Natural killer cell (primary cell): ENCODE measurements at regions of chr16 and their contacts with region 1.

Region 1: DNA sequence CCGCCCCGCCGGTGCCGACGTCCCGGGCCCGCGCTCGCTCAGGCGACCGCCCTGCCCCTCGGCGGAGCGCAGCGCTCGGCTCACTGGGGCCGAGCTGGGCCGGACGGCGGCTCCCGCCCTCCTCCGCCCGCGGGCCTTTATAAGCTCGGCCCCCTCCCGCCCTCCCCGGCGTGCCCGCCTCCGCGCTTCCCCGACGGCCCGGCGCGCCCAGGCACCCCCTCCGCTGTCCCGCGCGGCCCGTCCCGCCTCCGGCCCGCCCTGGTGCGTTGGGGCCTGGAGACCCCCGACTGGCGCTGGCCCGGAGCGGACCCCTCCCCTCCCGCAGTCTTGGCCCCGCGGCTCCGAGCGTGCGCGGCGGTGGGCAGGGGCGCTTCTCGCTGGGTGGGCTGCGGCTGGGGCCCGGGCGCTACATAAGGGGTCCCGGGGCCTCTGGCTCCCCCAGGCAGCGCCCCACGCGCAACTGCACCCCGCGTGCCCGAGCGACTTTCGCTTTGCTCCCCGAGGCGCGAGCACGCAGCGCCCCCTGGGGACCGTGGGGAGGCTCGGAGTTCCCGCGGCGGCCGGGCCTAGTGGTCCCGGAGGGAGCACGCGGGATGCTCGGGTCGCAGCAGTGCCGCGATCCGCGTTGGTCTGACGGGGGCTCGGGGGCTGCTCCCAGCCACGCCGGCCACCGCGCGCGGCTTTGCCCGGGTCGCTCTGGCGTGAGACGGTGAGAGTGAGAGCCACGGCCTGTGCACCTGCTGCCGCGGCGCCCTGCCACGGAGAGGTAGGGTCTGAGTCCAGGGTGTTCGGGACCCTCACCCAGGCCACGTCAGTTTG is at the start of gene PIEZO1:
- DNase-seq: peak; percentile 85 to 94
- ATAC-seq: peak; percentile 60 to 83 (median 75)
- H3K4me3 ChIP-seq: peak within 1 kb of the TSS; percentile 53
- H3K4me3 Mint-ChIP-seq: peak within 1 kb of the TSS; percentile 86
- H3K27ac ChIP-seq: peak within 1 kb of the TSS; percentile 78
- H3K27ac Mint-ChIP-seq: peak within 1 kb of the TSS; percentile 82 to 91
- H3K4me1 ChIP-seq: peaks cover 61% of the 10 kb centered on the region
- H3K4me1 Mint-ChIP-seq: peaks cover 44 to 50% of the 10 kb centered on the region in 2 donors
- H3K27me3 ChIP-seq: no peaks in the 10 kb centered on the region
- H3K27me3 Mint-ChIP-seq: no peaks in the 10 kb centered on the region
- CTCF ChIP-seq: peak; percentile 97
- total RNA-seq, gene PIEZO1: 172 to 197 (median 183) TPM

Region 2: GRCh38 chr16:88737298-88738150 is 47.8 kb before region 1 on chr16:
- intact Hi-C with region 1: loop called (anchors 1 kb)
- DNase-seq: peak; percentile 75 to 85
- ATAC-seq: peak; percentile 85 to 99 (median 90)
- H3K4me3 ChIP-seq: no peak overlapping the region
- H3K4me3 Mint-ChIP-seq: no peak overlapping the region
- H3K27ac ChIP-seq: no peak overlapping the region
- H3K27ac Mint-ChIP-seq: no peak overlapping the region
- H3K4me1 ChIP-seq: peaks cover 12% of the 10 kb centered on the region
- H3K4me1 Mint-ChIP-seq: peaks cover 0 to 5% of the 10 kb centered on the region in 2 donors
- H3K27me3 ChIP-seq: no peaks in the 10 kb centered on the region
- H3K27me3 Mint-ChIP-seq: no peaks in the 10 kb centered on the region
- CTCF ChIP-seq: peak; percentile 98

Region 3: GRCh38 chr16:88770461-88771293 is 14.6 kb before region 1 on chr16:
- intact Hi-C with region 1: loop called (anchors 2 kb)
- DNase-seq: peak; percentile 66 to 67
- ATAC-seq: peak; percentile 89 to 93 (median 92)
- H3K4me3 ChIP-seq: no peak overlapping the region
- H3K4me3 Mint-ChIP-seq: peak overlapping the region; percentile 75
- H3K27ac ChIP-seq: peak overlapping the region; percentile 55
- H3K27ac Mint-ChIP-seq: peak overlapping the region; percentile 82 to 85
- H3K4me1 ChIP-seq: peaks cover 73% of the 10 kb centered on the region
- H3K4me1 Mint-ChIP-seq: peaks cover 34 to 61% of the 10 kb centered on the region in 2 donors
- H3K27me3 ChIP-seq: no peaks in the 10 kb centered on the region
- H3K27me3 Mint-ChIP-seq: no peaks in the 10 kb centered on the region
- CTCF ChIP-seq: no peak

Region 4: GRCh38 chr16:88886845-88887521 is 101.7 kb after region 1 on chr16:
- intact Hi-C with region 1: no loop called
- DNase-seq: no peak
- ATAC-seq: no peak
- H3K4me3 ChIP-seq: no peak overlapping the region
- H3K4me3 Mint-ChIP-seq: no peak overlapping the region
- H3K27ac ChIP-seq: no peak overlapping the region
- H3K27ac Mint-ChIP-seq: no peak overlapping the region
- H3K4me1 ChIP-seq: peaks cover 5% of the 10 kb centered on the region
- H3K4me1 Mint-ChIP-seq: peaks cover 0 to 5% of the 10 kb centered on the region in 2 donors
- H3K27me3 ChIP-seq: no peaks in the 10 kb centered on the region
- H3K27me3 Mint-ChIP-seq: no peaks in the 10 kb centered on the region
- CTCF ChIP-seq: no peak